ENCODE measurements at regions of chr3 and their contacts with region 1.

Region 1: GRCh38 chr3:48635222-48636021 is at the start of gene SLC26A6:
- DNase-seq: peak; percentile 98
- H3K4me3 ChIP-seq: peak within 1 kb of the TSS; percentile 73 to 86 (median 80)
- H3K27ac ChIP-seq: peak within 1 kb of the TSS; percentile 87 to 91 (median 87)
- H3K4me1 ChIP-seq: peaks cover 0 to 26% (median 21%) of the 10 kb centered on the region in 4 donors
- H3K27me3 ChIP-seq: no peaks in the 10 kb centered on the region
- CTCF ChIP-seq: peak; percentile 38 to 58 (median 43)
- EP300 ChIP-seq: no peak
- POLR2A ChIP-seq: no peak
- total RNA-seq, gene SLC26A6: 6.4 to 33.0 (median 17.0) TPM

Region 2: GRCh38 chr3:48652923-48653715 is 17.7 kb after region 1 on chr3:
- intact Hi-C with region 1: loop called (anchors 2 kb)
- DNase-seq: no peak
- H3K4me3 ChIP-seq: no peak overlapping the region
- H3K27ac ChIP-seq: no peak overlapping the region
- H3K4me1 ChIP-seq: peaks cover 0 to 17% (median 16%) of the 10 kb centered on the region in 4 donors
- H3K27me3 ChIP-seq: peaks cover 0 to 6% (median 0%) of the 10 kb centered on the region in 3 donors
- CTCF ChIP-seq: no peak
- EP300 ChIP-seq: no peak
- POLR2A ChIP-seq: no peak

Region 3: DNA sequence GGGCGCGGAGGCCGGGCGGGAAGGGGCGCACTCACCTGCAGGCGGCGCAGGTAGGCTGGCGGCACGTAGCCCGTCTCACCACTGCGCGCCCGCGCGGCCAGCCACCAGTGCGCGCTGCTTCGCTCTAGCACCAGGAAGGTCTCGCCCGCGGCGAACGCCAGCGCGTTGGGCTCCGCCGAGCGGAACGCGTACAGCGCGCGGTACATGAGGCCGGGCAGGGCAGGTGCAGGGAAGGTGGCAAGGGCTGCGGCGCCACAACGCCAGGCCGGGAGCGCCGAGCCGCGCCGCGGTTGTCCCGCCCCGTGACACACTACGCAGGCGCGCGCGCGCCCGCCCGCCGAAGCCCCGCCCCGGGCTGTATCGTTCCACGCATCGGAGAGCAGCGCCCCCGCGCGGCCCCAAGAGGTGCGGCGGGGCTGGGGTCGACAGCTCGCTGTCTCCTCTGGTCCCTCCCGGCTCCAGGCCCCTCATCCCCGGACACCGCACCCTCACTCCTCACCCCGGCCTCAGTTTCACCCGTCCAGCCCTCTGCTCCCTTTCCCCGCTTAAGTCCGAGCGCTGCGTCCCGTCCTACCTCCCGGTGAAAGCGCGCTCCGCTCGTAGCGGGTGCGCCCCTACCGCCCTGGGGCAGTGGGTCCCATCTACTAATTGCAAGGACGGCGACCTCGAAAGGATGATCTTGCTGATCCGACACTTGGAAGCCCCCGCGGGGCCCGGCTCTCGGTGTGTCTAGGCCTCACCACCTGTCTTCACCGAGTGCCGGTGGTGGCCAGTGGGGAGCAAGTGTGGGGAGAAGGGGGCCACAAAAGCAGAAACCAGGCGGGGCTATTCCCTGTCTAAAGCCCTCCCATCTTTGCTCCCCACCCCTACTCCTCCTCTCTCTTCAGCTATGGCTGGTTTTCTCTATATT is 50.4 kb after region 1 on chr3 and contains the start of gene NCKIPSD:
- intact Hi-C with region 1: loop called (anchors 1 kb)
- DNase-seq: peak; percentile 93
- H3K4me3 ChIP-seq: peak within 1 kb of the TSS; percentile 65 to 94 (median 80)
- H3K27ac ChIP-seq: peak within 1 kb of the TSS; percentile 77 to 85 (median 80)
- H3K4me1 ChIP-seq: peaks cover 0 to 45% (median 36%) of the 10 kb centered on the region in 4 donors
- H3K27me3 ChIP-seq: no peaks in the 10 kb centered on the region
- CTCF ChIP-seq: peak; percentile 56 to 89 (median 81)
- EP300 ChIP-seq: no peak
- POLR2A ChIP-seq: peak in 1 of 2 donors; percentile 30
- total RNA-seq, gene NCKIPSD: 7.7 to 29.3 (median 22.8) TPM

Measured in sigmoid colon (tissue), 7 donors.